ENCODE measurements at regions of chr1 and their contacts with region 1.

Region 1: DNA sequence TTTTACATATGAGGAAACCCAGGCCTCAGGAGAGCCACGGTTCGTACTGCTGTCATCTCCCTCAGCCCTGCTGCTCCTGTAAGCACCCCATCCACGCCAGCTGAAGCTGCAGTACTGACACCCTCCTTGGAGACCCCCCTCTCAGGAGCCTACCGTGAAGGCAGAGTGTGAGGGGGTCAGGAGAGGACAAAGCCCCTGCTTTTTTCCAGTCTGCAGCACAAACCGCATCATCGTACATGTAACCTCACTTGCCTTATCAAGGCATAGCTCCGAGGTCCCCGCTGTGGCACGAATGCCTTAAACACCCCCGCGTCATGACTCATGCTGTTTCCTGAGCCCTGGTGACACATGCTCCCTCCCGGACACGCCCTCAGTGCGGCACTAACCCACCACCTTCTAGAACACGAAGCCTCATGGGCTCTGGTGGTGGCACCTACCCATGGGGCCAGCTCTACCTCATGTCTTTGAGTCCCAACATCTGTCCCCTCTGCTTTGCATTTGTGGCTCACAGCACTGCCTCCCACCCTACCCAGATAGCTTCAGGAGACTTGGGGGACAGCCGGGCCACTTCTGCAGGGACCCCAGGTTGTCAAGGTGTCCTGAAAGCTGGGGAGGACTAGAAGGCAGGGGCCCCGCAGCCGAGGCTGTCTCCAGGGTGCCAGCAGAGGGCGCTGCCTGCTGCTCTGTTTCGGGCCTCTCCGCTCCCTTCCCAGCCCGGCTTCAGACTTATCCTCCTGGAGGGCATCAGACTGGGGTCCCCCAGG is 4.9 kb downstream of the SH3BGRL3 start:
- DNase-seq: peak; percentile 97
- H3K4me3 Mint-ChIP-seq: peak overlapping the region; percentile 82
- H3K27ac Mint-ChIP-seq: peak overlapping the region; percentile 98
- H3K4me1 Mint-ChIP-seq: peaks cover 91% of the 10 kb centered on the region
- H3K27me3 Mint-ChIP-seq: no peaks in the 10 kb centered on the region

Region 2: GRCh38 chr1:26094677-26095383 is 189.9 kb before region 1 on chr1:
- CTCF ChIA-PET with region 1: no interaction called
- POLR2A ChIA-PET with region 1: no interaction called
- DNase-seq: no peak
- H3K4me3 Mint-ChIP-seq: no peak overlapping the region
- H3K27ac Mint-ChIP-seq: no peak overlapping the region
- H3K4me1 Mint-ChIP-seq: peaks cover 17% of the 10 kb centered on the region
- H3K27me3 Mint-ChIP-seq: peaks cover 46% of the 10 kb centered on the region

Region 3: GRCh38 chr1:26169669-26170471 is 114.9 kb before region 1 on chr1 and contains the start of gene ZNF593:
- CTCF ChIA-PET with region 1: interaction called, 11 read pairs
- POLR2A ChIA-PET with region 1: interaction called, 9 read pairs
- DNase-seq: peak; percentile 90
- H3K4me3 Mint-ChIP-seq: peak within 1 kb of the TSS; percentile 83
- H3K27ac Mint-ChIP-seq: peak within 1 kb of the TSS; percentile 70
- H3K4me1 Mint-ChIP-seq: peaks cover 32% of the 10 kb centered on the region
- H3K27me3 Mint-ChIP-seq: no peaks in the 10 kb centered on the region
- total RNA-seq, gene ZNF593: 20.3 to 22.9 TPM

Region 4: GRCh38 chr1:26358411-26359384 is 73.9 kb after region 1 on chr1:
- CTCF ChIA-PET with region 1: interaction called, 67 read pairs
- POLR2A ChIA-PET with region 1: interaction called, 28 read pairs
- DNase-seq: peak; percentile 87
- H3K4me3 Mint-ChIP-seq: peak overlapping the region; percentile 14
- H3K27ac Mint-ChIP-seq: peak overlapping the region; percentile 48
- H3K4me1 Mint-ChIP-seq: peaks cover 60% of the 10 kb centered on the region
- H3K27me3 Mint-ChIP-seq: peaks cover 17% of the 10 kb centered on the region

Region 5: GRCh38 chr1:26373281-26373680 is 88.5 kb after region 1 on chr1:
- CTCF ChIA-PET with region 1: interaction called, 22 read pairs
- POLR2A ChIA-PET with region 1: interaction called, 32 read pairs
- DNase-seq: peak; percentile 67
- H3K4me3 Mint-ChIP-seq: no peak overlapping the region
- H3K27ac Mint-ChIP-seq: peak overlapping the region; percentile 84
- H3K4me1 Mint-ChIP-seq: peaks cover 83% of the 10 kb centered on the region
- H3K27me3 Mint-ChIP-seq: no peaks in the 10 kb centered on the region

Region 6: DNA sequence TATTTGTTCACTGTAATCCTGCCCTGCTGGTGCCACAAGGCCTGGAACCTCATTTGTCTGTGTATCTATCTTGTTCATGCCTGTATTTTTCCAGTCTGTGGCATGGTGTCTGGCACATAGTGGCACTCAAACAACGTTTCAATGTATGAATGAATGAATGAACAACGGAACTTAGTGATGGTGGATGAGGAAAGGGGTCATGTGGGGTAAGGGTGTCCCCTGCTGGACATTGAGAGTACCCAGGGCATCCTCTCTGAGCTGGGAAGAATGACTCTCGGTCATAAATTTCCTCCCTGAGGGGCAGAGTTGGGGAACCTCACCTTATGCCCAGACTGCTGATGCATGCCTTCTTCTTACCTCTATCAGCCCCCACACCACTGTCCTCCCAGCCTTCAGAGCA is 106.7 kb after region 1 on chr1:
- CTCF ChIA-PET with region 1: interaction called, 31 read pairs
- POLR2A ChIA-PET with region 1: interaction called, 10 read pairs
- DNase-seq: peak; percentile 74
- H3K4me3 Mint-ChIP-seq: no peak overlapping the region
- H3K27ac Mint-ChIP-seq: no peak overlapping the region
- H3K4me1 Mint-ChIP-seq: peaks cover 43% of the 10 kb centered on the region
- H3K27me3 Mint-ChIP-seq: peaks cover 7% of the 10 kb centered on the region

Region 7: DNA sequence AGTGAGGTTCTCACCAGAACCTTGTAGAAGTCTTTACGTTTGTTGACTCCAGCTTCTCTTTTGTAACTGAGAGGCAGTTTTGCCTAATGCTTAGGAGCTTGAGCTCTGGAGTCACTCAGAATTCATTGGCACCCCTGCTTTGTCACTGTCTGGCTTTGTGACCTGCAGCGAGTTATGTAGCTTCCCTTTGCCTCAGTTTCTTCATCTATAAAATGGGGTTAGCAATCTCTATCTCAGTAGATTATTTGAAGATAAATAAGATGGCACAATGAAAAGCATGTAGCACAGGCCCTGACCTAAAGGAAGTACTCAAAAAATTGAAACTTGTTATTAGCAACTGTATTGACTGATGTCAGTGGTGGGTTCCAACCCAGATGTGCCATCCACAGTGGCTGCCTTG is 155.5 kb after region 1 on chr1:
- CTCF ChIA-PET with region 1: no interaction called
- POLR2A ChIA-PET with region 1: no interaction called
- DNase-seq: no peak
- H3K4me3 Mint-ChIP-seq: no peak overlapping the region
- H3K27ac Mint-ChIP-seq: no peak overlapping the region
- H3K4me1 Mint-ChIP-seq: peaks cover 2% of the 10 kb centered on the region
- H3K27me3 Mint-ChIP-seq: no peaks in the 10 kb centered on the region

Measured in activated CD4-positive, alpha-beta memory T cell treated with anti-CD3 and anti-CD28 coated beads, Interleukin-2, amount 10 ng/mL, durations not matched to agents 7 days and 5 days (primary cell).